ENCODE measurements at regions of chr22 and their contacts with region 1.

Region 1: DNA sequence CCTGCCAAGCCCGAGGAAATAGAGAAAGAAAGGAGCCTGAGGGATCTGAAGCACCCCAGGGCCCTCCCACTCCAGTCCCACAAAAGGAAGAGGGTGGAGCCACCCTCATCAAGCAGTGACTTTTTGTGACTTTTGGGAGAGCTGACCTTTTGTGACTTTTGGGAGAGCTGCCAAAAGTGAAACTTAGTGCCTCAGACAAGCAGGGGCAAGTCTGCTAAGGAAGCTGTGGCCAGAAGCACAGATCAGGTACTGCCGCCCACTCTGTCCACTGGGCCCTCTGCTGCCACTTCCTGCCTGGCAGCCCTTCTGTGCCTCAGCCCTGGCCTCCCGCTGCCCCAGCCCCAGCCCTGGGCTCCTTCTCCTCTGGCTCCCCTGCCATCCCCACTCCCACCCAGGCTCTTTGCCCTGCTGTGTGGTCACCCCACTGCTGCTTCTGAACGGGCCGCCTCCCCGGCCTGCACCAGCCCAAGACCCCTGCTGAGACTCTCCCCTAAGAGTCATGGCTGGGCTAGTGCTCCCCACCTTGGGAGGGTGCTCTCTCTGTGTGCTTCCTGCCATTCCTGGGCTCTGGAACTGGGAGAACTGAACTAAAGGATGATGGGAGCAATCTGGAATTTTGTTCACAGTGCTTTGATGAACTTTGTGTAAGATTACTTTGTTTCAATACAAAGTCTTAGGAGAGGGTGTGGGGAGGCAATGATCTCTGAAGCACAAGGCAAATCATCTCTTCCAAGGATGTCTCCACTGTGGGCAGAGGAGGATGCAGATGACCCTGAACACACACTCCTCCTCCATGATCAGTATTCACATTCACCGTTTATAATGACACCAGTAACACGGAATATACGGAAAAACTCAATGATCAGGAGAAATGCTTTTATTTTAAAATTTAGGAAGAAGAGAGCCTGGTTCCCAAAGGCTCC is at the start of gene APOBEC3H:
- DNase-seq: peak; percentile 70 to 80
- H3K4me3 ChIP-seq: peak within 1 kb of the TSS; percentile 19; the same call in 1 of the 2 replicates
- H3K27ac ChIP-seq: peak within 1 kb of the TSS; percentile 62
- H3K4me1 ChIP-seq: peaks cover 66% of the 10 kb centered on the region
- H3K27me3 ChIP-seq: no peaks in the 10 kb centered on the region
- CTCF ChIP-seq: no peak
- total RNA-seq, gene APOBEC3H: 1.5 and 2.5 TPM in 2 replicates

Region 2: DNA sequence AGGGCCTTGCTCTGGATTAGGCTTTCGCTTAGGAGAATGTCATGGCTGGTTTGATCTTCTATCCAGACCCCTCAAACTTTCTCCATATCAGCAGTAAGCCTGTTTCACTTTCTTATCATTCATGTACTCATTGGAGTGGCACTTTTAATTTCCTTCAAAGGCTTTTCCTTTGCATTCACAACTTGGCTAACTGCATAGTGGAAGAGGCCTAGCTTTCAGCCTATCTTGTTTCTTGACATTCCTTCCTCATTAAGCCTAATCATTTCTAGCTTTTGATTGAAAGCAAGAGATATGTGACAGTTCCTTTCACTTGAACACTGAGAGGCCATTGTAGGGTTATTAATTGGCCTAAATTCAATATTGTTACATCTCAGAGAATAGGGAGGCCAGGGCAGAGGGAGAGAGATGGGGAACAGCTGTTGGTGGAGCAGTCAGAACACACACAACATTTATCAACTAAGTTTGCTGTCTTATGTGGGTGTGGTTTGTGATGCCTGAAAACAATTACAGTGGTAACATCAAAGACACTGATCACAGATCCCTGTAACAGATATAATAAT is 177.6 kb before region 1 on chr22:
- CTCF ChIA-PET with region 1: no interaction called
- POLR2A ChIA-PET with region 1: no interaction called
- intact Hi-C with region 1: no loop called
- DNase-seq: no peak
- H3K4me3 ChIP-seq: no peak overlapping the region
- H3K27ac ChIP-seq: no peak overlapping the region
- H3K4me1 ChIP-seq: peaks cover 42% of the 10 kb centered on the region
- H3K27me3 ChIP-seq: peaks cover 14% of the 10 kb centered on the region; the same call in 1 of the 2 replicates
- CTCF ChIP-seq: no peak

Region 3: GRCh38 chr22:39021552-39022250 is 75.7 kb before region 1 on chr22:
- CTCF ChIA-PET with region 1: no interaction called
- POLR2A ChIA-PET with region 1: no interaction called
- intact Hi-C with region 1: loop called (anchors 5 kb)
- DNase-seq: no peak
- H3K4me3 ChIP-seq: no peak overlapping the region
- H3K27ac ChIP-seq: no peak overlapping the region
- H3K4me1 ChIP-seq: peaks cover 8% of the 10 kb centered on the region
- H3K27me3 ChIP-seq: no peaks in the 10 kb centered on the region
- CTCF ChIP-seq: no peak

Region 4: GRCh38 chr22:39039306-39040126 is 57.8 kb before region 1 on chr22:
- CTCF ChIA-PET with region 1: interaction called, 11 read pairs
- POLR2A ChIA-PET with region 1: no interaction called
- intact Hi-C with region 1: no loop called
- DNase-seq: no peak
- H3K4me3 ChIP-seq: peak overlapping the region; percentile 62; the same call in 1 of the 2 replicates
- H3K27ac ChIP-seq: no peak overlapping the region
- H3K4me1 ChIP-seq: peaks cover 27% of the 10 kb centered on the region
- H3K27me3 ChIP-seq: no peaks in the 10 kb centered on the region
- CTCF ChIP-seq: no peak

Region 5: GRCh38 chr22:39144101-39144767 is 46.9 kb after region 1 on chr22:
- CTCF ChIA-PET with region 1: no interaction called
- POLR2A ChIA-PET with region 1: no interaction called
- intact Hi-C with region 1: no loop called
- DNase-seq: peak in 1 of 2 experiments; percentile 51
- H3K4me3 ChIP-seq: peak overlapping the region; percentile 98
- H3K27ac ChIP-seq: no peak overlapping the region
- H3K4me1 ChIP-seq: peaks cover 15% of the 10 kb centered on the region
- H3K27me3 ChIP-seq: no peaks in the 10 kb centered on the region
- CTCF ChIP-seq: no peak